ENCODE measurements at regions of chr14 and their contacts with region 1.

Region 1: GRCh38 chr14:70622111-70622712 is 19.5 kb upstream of the TTC9 start:
- DNase-seq: no peak
- ATAC-seq: peak in 1 of 2 donors; percentile 75
- H3K4me3 ChIP-seq: no peak overlapping the region
- H3K27ac ChIP-seq: no peak overlapping the region
- H3K4me1 ChIP-seq: no peaks in the 10 kb centered on the region
- H3K27me3 ChIP-seq: no peaks in the 10 kb centered on the region

Region 2: DNA sequence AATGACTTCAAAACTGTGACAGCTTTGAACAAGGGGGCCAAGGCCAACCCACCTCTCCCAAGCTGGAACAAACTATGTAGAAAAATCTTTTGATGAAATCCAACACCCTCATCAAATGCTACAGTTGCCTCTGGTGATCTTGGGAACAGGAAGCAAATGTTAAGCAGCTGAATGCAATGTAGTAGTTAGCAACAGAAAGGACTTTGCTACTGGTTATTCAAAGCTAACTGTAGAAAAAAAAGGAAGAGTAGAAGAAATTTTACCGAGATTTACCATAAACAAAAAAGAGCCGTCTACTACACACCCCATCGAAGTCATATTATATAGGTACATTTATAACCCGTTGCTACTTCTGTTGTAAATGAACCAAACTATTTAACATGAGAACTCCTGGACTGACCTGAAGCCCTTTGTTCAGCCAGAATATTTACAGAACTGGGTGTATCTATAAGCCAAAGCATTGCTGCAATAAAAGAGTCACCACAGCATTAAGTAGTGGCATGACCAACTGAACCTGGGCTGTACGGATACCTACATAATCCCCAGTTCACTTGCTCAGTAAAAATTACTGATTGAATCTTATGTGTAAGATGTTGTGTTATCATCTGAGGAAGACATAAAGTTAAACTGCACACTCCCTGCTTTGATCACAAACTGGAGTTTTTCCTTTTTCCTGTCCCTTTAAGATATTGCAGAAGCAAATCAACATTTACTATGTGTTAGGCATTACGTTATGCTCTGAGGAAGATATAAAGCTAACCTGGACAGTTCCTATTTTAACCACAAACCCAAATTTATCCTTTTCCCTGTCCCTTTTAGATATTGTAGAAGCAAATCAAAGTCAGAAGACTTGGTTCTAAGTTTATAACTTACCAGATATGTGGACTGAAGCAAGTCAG is 230.5 kb before region 1 on chr14:
- intact Hi-C with region 1: no loop called
- DNase-seq: no peak
- ATAC-seq: no peak
- H3K4me3 ChIP-seq: no peak overlapping the region
- H3K27ac ChIP-seq: no peak overlapping the region
- H3K4me1 ChIP-seq: no peaks in the 10 kb centered on the region
- H3K27me3 ChIP-seq: no peaks in the 10 kb centered on the region

Region 3: DNA sequence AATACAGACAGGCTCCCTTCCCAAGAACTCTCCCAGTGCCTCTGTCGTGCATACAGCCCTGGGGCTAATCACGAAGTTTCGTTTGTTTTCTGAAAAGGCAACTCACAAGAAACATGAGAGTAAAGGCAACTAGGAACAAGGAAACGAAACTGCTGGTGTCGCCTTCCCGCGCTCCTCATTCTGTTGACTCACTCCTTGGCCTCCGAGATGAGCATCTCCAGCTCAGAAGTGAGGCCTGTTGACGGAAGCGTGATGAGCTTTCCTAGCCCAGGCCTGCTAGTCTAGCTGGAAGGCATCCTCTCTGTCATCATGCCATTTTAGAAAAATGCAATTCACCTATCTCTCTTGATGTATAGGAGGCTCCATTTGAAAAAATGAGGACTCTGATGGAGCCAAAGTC is 70.0 kb after region 1 on chr14:
- intact Hi-C with region 1: no loop called
- DNase-seq: peak; percentile 24 to 69 (median 60)
- ATAC-seq: peak; percentile 41 to 51
- H3K4me3 ChIP-seq: no peak overlapping the region
- H3K27ac ChIP-seq: no peak overlapping the region
- H3K4me1 ChIP-seq: no peaks in the 10 kb centered on the region
- H3K27me3 ChIP-seq: no peaks in the 10 kb centered on the region

Region 4: GRCh38 chr14:70714055-70714621 is 91.9 kb after region 1 on chr14:
- intact Hi-C with region 1: loop called in 2 of 4 experiments (anchors 5 to 10 kb)
- DNase-seq: no peak
- ATAC-seq: peak; percentile 12 to 34
- H3K4me3 ChIP-seq: no peak overlapping the region
- H3K27ac ChIP-seq: no peak overlapping the region
- H3K4me1 ChIP-seq: no peaks in the 10 kb centered on the region
- H3K27me3 ChIP-seq: no peaks in the 10 kb centered on the region

Region 5: GRCh38 chr14:70809543-70810244 is 187.5 kb after region 1 on chr14:
- intact Hi-C with region 1: loop called in 1 of 4 experiments (anchors 10 kb)
- DNase-seq: peak; percentile 82 to 94 (median 93)
- ATAC-seq: peak; percentile 96 to 97
- H3K4me3 ChIP-seq: peak overlapping the region; percentile 64
- H3K27ac ChIP-seq: no peak overlapping the region
- H3K4me1 ChIP-seq: peaks cover 2% of the 10 kb centered on the region
- H3K27me3 ChIP-seq: no peaks in the 10 kb centered on the region

Region 6: GRCh38 chr14:70816525-70816924 is 194.3 kb after region 1 on chr14:
- intact Hi-C with region 1: loop called in 2 of 4 experiments (anchors 5 to 10 kb)
- DNase-seq: no peak
- ATAC-seq: no peak
- H3K4me3 ChIP-seq: no peak overlapping the region
- H3K27ac ChIP-seq: no peak overlapping the region
- H3K4me1 ChIP-seq: no peaks in the 10 kb centered on the region
- H3K27me3 ChIP-seq: no peaks in the 10 kb centered on the region

Region 7: DNA sequence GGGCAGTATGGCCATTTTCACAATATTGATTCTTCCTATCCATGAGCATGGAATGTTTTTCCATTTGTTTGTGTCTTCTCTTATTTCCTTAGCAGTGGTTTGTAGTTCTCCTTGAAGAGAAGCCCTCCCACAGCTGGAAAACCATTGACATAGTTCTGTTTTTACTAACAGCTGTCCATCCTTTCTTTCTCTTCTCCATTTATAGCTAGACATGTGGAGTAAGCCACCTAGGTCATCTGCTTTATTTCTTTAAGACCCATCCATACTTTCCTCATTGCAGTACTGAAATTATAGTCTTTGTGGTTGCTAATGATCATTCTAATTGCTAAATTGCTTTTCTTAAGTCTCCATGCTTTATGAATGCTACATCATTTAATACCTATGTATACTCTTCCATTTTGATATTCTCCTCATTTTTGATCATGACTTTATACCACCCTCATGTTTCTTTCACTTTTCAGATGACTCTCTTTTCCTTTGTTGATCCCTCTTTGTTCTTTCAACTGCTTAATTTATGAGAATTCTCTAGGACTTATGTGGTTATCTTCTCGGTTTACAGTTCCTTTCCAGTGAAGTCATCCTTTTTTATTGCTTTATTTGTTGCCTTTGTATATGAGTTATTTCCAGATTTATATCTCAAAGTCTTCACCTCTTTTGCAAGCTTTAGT is 399.3 kb after region 1 on chr14:
- intact Hi-C with region 1: no loop called
- DNase-seq: no peak
- ATAC-seq: no peak
- H3K4me3 ChIP-seq: no peak overlapping the region
- H3K27ac ChIP-seq: no peak overlapping the region
- H3K4me1 ChIP-seq: no peaks in the 10 kb centered on the region
- H3K27me3 ChIP-seq: no peaks in the 10 kb centered on the region